Dorsolateral prefrontal cortex (tissue), 120 donors: ENCODE measurements at regions of chr11 and their contacts with region 1.

Region 1: DNA sequence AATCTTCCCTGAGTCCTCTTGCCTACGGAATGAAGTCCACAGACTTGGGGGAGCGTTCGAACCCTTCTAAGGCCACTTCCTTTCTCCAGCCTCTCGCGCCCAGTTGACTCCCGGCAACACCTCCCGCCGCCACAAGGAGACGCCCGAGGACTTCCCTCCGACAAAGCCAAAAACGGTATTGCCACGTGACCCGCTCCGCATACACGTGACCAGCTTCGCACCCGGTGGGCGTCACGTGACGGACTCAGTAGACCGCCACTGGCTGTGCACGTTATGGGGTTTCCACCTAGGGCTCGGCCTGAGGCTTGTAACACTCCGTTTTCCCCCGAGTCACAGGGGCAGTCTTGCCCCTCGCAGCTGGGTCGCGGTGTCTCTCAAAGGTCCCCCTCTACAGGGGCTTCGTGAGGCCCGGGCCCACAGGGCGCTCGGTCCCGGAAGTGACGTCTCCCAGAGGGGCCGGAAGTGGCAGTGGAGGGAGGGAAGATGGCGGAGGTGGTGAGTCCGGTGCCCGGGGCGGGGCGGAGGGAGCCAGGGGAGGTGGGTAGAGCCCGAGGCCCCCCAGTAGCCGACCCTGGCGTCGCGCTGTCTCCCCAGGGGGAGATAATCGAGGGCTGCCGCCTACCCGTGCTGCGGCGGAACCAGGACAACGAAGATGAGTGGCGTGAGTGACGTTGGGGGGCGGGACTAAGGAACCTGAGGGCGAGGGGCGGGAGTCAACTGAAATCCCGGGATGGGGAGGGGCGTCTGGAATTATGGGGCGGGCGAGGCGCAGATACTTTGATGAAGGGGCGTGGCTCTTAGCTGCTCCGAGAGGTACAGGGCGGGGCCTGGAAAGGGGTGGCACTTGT is at the start of gene KAT5:
- DNase-seq: peak; percentile 97 to 99 (median 98)
- H3K4me3 ChIP-seq: peak within 1 kb of the TSS; percentile 58 to 100 (median 84)
- H3K27ac ChIP-seq: peak within 1 kb of the TSS; percentile 96 to 100 (median 100)
- H3K27me3 ChIP-seq: no peaks in the 10 kb centered on the region
- CTCF ChIP-seq: peak; percentile 92 to 100 (median 99)
- total RNA-seq, gene KAT5: 57.1 to 97.9 (median 76.4) TPM

Region 2: DNA sequence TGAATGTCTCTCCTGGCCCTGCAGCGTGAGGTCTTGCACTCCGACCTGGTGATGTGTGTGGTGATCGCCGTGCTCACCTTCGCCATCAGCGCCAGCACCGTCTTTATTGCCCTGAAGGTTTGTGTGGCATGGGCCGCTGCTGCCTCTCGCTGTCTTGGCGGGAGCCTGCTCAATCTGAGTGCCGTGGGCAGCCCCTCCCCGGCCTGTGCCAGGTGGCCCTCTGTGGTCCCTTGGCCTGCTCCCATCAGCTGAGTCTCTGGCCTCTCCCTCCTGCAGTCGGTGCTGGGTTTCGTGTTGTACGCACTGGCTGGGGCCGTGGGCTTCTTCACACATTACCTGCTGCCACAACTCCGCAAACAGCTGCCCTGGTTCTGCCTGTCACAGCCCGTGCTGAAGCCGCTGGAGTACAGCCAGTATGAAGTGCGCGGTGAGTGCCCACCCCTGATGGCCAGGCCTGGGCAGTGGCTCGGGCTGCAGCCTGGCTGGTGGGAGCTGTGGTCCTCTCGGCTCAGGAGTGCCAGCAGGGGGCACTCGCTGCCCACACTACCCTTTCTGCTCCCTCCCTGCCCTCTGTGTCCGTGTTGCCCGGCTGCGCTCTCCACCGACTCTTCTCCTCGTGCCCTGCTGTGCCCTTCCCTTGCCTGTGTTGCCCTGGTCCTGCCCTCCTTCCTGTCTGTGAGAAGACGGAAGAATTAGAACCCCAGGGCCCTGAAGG is 86.2 kb before region 1 on chr11:
- intact Hi-C with region 1: loop called in 1 of 2 experiments (anchors 5 kb)
- DNase-seq: peak; percentile 63 to 82 (median 72)
- H3K4me3 ChIP-seq: peak overlapping the region in 5 of 59 donors; percentile 4 to 35 (median 10)
- H3K27ac ChIP-seq: peak overlapping the region in 35 of 59 donors; percentile 5 to 84 (median 45)
- H3K27me3 ChIP-seq: no peaks in the 10 kb centered on the region
- CTCF ChIP-seq: peak; percentile 19 to 90 (median 78)

Region 3: GRCh38 chr11:65662799-65663638 is 49.0 kb before region 1 on chr11 and contains the start of gene RELA:
- intact Hi-C with region 1: loop called (anchors 1 to 5 kb)
- DNase-seq: peak; percentile 90 to 97 (median 94)
- H3K4me3 ChIP-seq: peak within 1 kb of the TSS; percentile 62 to 100 (median 92)
- H3K27ac ChIP-seq: peak within 1 kb of the TSS; percentile 91 to 100 (median 99)
- H3K27me3 ChIP-seq: no peaks in the 10 kb centered on the region
- CTCF ChIP-seq: peak in 30 of 56 donors; percentile 6 to 51 (median 24)
- total RNA-seq, gene RELA: 28.1 to 93.7 (median 48.2) TPM

Region 4: DNA sequence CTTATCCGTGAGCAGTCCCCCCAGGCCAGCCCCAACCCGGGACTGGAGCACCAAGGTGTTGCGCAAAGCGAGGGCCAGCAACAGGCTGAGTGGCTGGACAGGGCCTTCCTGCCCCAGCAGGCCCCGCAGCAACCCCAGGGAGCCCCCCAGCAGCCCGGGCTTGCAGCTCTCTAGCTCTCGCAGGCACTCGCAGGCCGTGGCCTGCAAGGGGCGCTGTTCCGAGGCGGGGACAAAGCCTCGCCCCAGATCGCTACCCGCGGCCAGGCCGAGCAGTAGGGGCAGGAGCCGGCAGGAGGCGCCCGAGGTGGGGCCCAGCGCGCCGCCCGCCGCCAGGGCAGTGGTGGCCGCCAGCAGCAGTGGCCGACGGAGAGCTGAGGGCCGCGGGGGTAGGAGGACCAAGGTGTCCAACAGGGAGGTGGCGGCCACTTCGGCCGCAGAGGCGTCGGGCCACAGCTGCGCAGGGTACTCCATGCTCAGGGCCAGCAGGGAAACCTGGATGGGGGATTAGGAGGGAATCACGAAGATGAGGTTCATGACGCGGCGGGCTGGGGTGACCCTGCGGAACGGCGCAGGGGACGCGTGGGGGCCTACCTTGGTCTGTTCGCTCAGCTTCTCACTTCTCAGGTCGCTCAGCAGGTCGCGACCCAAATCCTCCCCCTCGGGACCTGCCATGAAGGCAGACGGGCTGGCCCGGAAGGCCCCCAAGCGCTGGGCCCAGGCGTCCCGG is 68.0 kb after region 1 on chr11:
- intact Hi-C with region 1: loop called in 1 of 2 experiments (anchors 5 kb)
- DNase-seq: peak in 9 of 10 donors; percentile 43 to 85 (median 63)
- H3K4me3 ChIP-seq: peak overlapping the region; percentile 58 to 99 (median 88)
- H3K27ac ChIP-seq: peak overlapping the region in 54 of 59 donors; percentile 33 to 91 (median 74)
- H3K27me3 ChIP-seq: peaks cover 0 to 5% (median 0%) of the 10 kb centered on the region in 45 donors
- CTCF ChIP-seq: peak; percentile 58 to 96 (median 85)

Region 5: DNA sequence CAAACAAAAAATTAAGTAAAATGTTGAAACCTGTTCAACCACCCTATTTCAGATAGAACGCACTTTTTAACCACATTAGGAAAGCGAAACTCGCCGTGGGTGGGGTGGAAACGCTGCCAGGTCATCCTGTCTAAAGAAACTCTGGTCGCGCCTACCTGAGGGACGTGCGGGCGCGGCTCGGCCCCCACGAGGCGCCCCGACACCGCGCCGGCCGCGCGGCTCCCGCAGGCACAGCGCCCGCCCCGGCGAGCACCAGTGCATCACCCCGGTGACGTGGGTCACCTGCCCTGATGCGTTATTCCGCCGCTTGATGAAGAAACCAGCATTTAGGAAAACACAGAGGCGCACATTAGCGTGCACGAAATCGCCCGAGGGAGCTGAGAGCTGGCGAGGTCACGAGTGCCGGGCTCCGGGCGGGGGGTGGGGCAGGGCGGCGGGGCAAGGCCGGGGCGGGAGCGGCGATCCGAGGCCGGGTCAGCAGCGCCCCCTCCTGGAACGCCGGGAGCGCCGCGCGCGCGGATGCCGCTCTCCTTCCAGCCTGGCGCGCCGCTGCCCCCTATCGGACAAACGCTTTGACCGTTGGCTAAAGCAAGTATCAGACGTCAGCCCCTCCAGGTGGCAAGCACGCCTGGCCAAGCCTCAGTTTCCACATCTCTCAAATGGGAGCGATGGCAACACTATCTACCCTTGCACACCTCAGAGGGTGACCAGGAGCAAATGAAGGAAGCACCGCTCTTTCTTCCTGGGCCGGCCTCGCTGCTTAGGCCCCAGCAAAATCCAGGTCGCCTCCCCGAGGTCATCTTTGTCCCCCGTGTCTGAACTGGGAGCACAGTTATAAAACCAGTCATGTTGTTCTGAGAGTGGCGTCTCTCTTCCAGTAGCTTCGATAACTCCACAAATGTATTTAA is 106.1 kb after region 1 on chr11:
- intact Hi-C with region 1: loop called (anchors 1 to 2 kb)
- DNase-seq: peak; percentile 88 to 95 (median 92)
- H3K4me3 ChIP-seq: peak overlapping the region; percentile 48 to 97 (median 73)
- H3K27ac ChIP-seq: peak overlapping the region in 51 of 59 donors; percentile 19 to 91 (median 75)
- H3K27me3 ChIP-seq: no peaks in the 10 kb centered on the region
- CTCF ChIP-seq: peak; percentile 95 to 100 (median 100)

Region 6: DNA sequence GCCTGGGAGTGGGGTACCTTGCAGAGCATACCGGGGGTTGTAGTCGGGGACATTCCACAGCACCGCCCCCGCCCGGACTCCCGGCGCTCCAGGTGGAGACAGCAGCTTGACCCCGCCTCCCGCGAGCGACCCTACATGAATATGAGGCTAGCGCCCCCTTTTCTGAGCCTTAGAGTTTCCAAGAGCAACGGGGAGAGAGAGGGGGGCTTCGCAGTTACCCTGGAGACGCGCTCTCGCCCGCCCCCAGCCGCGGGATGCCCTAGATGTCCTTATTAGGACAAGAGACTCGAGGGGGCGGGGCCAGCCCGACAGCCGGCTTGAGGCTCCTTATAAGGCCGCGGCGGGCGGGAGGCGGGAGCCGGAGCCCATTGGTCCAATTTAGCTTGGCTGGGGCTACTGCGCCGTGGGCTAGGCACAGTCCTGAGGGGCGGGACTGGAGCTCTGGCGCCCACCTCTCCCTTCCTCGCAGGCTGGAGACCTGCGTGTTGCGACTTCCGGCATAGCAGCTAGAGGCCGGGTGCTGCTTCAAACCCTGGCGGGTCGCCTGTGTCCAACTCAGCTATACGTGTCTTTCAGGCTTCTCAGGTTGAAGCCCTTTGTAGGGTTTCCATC is 147.3 kb after region 1 on chr11:
- intact Hi-C with region 1: loop called in 1 of 2 experiments (anchors 5 kb)
- DNase-seq: peak; percentile 94 to 99 (median 98)
- H3K4me3 ChIP-seq: peak overlapping the region; percentile 65 to 99 (median 93)
- H3K27ac ChIP-seq: peak overlapping the region; percentile 70 to 99 (median 97)
- H3K27me3 ChIP-seq: no peaks in the 10 kb centered on the region
- CTCF ChIP-seq: peak in 28 of 56 donors; percentile 6 to 56 (median 34)

Region 7: DNA sequence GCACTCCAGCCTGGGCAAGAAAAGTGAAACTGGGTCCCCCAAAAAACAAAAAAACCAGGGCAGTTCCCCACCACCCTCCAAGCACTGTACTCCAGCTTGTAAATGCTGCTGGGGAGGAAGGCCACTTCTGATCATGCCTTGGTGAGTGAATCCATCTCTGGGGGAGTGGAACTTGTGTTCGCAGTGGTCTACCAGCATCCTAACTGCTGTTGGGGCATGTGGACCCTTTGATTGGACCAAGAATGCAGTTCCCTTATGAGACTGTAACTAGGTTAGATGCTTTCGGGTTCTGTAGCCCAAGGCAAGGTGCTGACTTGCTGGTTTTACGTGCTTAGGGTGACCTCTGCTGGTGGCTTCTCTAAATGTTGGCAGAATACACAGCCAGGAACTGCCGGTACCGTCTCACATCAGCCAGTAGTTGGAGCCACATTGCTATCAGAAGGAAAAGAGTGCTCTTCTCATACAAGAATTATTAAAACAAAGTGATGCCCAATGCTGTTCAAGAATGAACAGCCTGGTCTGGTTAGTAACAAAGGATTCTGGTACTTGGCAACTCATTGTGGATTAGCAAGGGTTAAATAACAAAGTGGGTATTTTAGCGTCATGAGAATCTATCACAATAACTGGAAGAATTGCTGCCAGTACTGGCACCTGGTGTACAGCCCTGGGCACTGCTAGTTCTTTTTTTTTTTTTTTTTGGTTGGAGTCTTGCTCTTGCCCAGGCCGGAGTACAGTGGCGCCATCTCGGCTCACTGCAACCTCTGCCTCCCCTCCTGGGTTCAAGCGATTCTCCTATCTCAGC is 277.0 kb after region 1 on chr11:
- intact Hi-C with region 1: loop called in 1 of 2 experiments (anchors 2 kb)
- DNase-seq: peak; percentile 53 to 97 (median 88)
- H3K4me3 ChIP-seq: peak overlapping the region in 4 of 59 donors; percentile 6 to 26 (median 16)
- H3K27ac ChIP-seq: peak overlapping the region in 19 of 59 donors; percentile 0 to 67 (median 37)
- H3K27me3 ChIP-seq: no peaks in the 10 kb centered on the region
- CTCF ChIP-seq: peak; percentile 74 to 99 (median 95)